Posterior cingulate gyrus (tissue), 11 donors: ENCODE measurements at regions of chr4 and their contacts with region 1.

Region 1: DNA sequence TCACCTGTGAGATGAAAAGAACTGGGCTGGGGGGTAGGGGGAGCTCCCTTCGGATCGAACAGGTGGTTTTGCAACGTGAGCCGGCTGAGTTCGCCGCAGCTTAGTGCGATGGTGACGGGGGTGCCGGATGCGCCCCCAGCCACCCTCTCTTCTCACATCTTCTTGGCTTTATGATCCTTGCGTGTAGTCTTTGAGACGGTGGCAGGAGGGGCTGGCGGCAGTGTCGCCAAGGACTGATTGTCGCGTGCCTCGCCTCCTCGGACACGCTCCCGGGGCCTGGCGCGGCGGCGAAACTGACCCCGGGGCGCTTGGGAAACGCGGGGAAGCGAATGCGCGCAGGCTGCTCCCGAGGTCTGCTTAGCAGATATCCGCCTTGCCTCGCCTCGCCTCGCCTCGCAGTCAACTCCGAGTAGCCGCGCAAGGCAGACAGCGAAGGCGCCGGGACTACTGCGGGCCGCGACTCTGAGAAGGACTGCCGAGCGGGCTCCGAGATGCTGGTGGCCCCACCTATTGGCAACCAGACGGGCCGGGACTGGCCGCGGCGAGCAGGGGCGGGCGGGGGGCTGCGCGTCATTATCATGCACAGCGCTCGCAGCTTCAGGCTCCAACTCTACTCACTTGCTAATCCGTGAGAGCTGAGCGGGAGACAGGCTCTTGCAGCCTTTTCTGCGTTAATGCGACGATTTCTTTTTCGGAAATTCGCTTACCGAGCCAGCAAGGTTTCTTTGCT is 1.5 kb downstream of the GRID2 start:
- DNase-seq: peak; percentile 67 to 96 (median 85)

Region 2: GRCh38 chr4:91113130-91113706 is 1192.1 kb before region 1 on chr4:
- intact Hi-C with region 1: loop called (anchors 10 kb)
- DNase-seq: no peak